Calu3 (cell line): ENCODE measurements at regions of chr16 and their contacts with region 1.

Region 1: GRCh38 chr16:75997606-75998005 is 271.3 kb upstream of the CPHXL start:
- DNase-seq: no peak
- H3K4me3 Mint-ChIP-seq: no peak overlapping the region
- H3K27ac Mint-ChIP-seq: no peak overlapping the region
- H3K4me1 Mint-ChIP-seq: no peaks in the 10 kb centered on the region
- H3K27me3 Mint-ChIP-seq: peaks cover 3% of the 10 kb centered on the region
- CTCF ChIP-seq: no peak

Region 2: DNA sequence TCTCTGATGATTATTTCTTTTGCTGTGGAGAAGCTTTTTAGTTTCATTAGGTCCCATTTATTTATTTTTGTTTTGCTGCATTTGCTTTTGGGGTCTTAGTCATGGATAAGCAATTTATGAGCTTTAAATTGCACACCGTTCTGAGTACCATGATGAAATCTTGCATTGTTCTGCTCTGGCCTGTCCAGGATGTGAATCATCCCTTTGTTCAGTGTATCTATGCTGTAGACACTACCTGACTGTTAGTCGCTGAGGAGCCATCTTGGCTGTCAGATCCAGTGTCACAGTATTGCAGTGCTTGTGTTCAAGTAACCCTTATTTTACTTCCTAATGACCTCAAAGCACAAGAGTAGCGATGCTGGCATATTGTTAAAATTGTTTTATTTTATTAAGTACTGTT is 61.6 kb after region 1 on chr16:
- CTCF ChIA-PET with region 1: no interaction called
- intact Hi-C with region 1: loop called (anchors 2 kb)
- DNase-seq: no peak
- H3K4me3 Mint-ChIP-seq: no peak overlapping the region
- H3K27ac Mint-ChIP-seq: no peak overlapping the region
- H3K4me1 Mint-ChIP-seq: no peaks in the 10 kb centered on the region
- H3K27me3 Mint-ChIP-seq: no peaks in the 10 kb centered on the region
- CTCF ChIP-seq: no peak